Dendritic cell treated with granulocyte-macrophage colony-stimulating factor and Interleukin-4, amounts not matched to agents 40 ng/mL and 50 ng/mL, for 4 days (primary cell): ENCODE measurements at regions of chr18 and their contacts with region 1.

Region 1: DNA sequence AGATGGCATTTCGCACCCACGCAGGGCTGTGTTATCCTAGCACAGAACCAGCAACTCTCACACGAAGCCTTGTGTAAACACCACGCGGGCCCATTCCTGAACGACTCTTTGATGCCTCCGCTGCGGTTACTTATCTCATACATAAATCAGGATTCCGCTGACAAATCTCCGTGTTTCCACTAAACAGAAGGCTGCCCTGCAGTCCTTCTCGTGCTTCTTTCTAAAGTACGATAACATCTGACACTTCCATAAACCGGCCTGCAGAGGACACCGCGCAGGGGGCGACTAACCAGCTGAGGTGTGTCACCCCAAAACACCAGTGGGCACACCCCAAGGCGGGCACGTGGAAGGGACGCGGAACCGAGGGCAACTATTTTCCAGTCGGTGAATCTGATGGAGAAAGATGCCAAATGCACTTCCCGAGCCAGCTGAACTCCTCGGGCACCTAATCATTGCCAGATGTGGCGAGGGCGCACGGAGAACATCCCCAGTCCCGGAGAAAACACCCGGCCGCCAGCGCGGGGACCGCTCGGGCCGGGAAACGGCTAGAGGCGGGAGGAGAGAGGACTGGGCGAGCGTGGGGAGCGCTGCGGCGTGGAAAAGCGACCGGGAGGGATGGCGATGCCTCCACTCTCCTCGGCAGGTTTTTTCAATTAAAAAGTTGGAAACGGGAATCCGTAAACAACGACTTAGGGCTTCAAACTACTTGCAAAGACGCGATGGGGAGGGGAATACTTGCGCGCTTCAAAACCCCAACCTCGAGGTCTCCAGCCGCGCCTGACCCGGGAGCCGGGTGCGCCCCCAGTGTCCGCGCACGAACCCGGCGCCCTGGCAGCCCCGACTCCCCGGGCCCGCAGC is 721 bp downstream of the COLEC12 start:
- H3K4me3 Mint-ChIP-seq: peak overlapping the region; percentile 86
- H3K27ac Mint-ChIP-seq: peak overlapping the region; percentile 66
- H3K4me1 Mint-ChIP-seq: peaks cover 32% of the 10 kb centered on the region
- H3K27me3 Mint-ChIP-seq: peaks cover 62% of the 10 kb centered on the region

Region 2: DNA sequence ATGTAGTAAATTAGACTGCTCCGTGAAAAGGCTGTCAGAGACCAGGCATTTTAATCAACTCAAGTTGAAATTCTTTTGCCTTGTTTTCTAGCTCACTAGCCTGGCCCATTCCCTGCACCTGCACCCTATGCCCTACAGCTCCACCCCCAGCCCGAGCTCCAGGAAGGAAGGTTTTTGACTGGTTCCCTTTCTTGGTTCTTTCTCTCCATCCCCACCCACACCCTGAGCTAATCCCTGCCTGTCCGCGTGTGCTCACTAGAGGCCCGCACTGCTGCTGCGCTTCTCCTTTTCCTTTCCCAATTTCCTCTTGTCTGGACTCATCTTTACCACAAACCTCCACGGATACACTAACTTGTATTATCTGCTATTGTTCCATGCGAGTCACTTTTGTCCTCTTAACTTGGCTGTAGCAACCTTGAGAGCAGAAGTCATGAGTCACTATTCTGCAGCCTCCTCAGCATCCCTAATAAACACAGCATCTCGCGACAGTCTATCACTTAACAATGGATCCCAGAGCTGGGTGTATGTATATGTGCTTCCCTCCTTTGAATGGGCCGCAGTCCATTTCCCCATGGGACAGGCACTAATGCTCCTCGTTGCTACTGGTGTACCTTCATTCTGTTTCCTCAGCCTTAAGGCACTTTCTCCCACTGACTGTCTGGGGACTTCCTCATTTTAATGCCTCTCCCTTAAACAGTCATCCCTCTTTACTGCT is 35.8 kb before region 1 on chr18:
- intact Hi-C with region 1: loop called (anchors 5 kb)
- H3K4me3 Mint-ChIP-seq: no peak overlapping the region
- H3K27ac Mint-ChIP-seq: peak overlapping the region; percentile 52
- H3K4me1 Mint-ChIP-seq: peaks cover 26% of the 10 kb centered on the region
- H3K27me3 Mint-ChIP-seq: no peaks in the 10 kb centered on the region

Region 3: GRCh38 chr18:627231-627630 is 127.5 kb after region 1 on chr18:
- intact Hi-C with region 1: no loop called
- H3K4me3 Mint-ChIP-seq: no peak overlapping the region
- H3K27ac Mint-ChIP-seq: no peak overlapping the region
- H3K4me1 Mint-ChIP-seq: no peaks in the 10 kb centered on the region
- H3K27me3 Mint-ChIP-seq: peaks cover 21% of the 10 kb centered on the region